Heart left ventricle (tissue), 16 donors: ENCODE measurements at regions of chr16 and their contacts with region 1.

Region 1: DNA sequence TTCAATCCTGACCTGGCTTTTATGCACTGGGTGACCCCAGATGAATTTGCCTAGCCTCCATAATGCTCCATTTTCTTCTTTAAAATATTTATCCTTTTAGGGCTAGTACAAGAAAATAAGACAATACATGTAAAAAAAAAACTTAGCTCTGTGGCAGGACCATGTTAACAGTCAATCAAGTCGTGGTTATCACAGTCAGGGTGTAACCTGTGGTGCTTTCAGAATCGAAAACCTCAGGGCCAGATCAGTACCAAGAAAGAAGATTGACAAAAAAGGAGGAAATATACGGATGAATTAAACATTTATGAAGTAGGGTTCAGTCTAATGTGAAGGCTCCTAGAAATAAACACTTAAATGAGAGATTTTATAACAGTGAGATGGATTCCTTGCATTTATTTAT is 347.2 kb upstream of the MAF start:
- DNase-seq: no peak
- ATAC-seq: no peak
- H3K4me3 ChIP-seq: no peak overlapping the region
- H3K27ac ChIP-seq: no peak overlapping the region
- H3K4me1 ChIP-seq: peaks cover 0 to 5% (median 0%) of the 10 kb centered on the region in 12 donors
- H3K27me3 ChIP-seq: no peaks in the 10 kb centered on the region
- CTCF ChIP-seq: no peak
- POLR2A ChIP-seq: no peak

Region 2: DNA sequence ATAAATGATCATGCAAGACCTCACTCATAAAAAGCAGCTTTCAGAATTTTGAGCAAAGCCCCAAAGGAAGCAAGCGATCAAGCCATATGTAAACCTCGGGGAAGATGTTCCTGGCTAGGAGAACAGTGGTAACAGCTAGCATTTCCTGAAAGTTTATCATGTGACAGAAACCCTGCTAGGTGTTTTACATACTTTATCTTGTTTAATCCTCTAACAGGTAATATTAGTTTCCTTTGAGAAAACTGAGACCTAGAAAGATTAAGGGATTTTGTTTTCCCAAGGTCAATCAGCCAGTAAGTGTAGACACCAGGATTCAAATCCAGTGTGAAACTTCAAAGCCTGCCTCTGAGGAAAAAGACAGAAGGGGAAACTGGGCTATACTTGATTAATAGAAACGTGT is 15.2 kb after region 1 on chr16:
- intact Hi-C with region 1: loop called in 1 of 10 experiments (anchors 1 kb)
- DNase-seq: no peak
- ATAC-seq: no peak
- H3K4me3 ChIP-seq: no peak overlapping the region
- H3K27ac ChIP-seq: no peak overlapping the region
- H3K4me1 ChIP-seq: no peaks in the 10 kb centered on the region
- H3K27me3 ChIP-seq: peaks cover 0 to 7% (median 0%) of the 10 kb centered on the region in 9 donors
- CTCF ChIP-seq: no peak
- POLR2A ChIP-seq: no peak